Activated T-helper 2 cell treated with anti-CD3 and anti-CD28 coated beads, Interferon-gamma antibody, Interleukin-2, Interleukin-4, amounts not matched to agents 10 μg/mL and 5 μg/mL and 100 μg/mL, durations not matched to agents 14 hours and 24 hours and 36 hours (primary cell): ENCODE measurements at regions of chr16 and their contacts with region 1.

Region 1: DNA sequence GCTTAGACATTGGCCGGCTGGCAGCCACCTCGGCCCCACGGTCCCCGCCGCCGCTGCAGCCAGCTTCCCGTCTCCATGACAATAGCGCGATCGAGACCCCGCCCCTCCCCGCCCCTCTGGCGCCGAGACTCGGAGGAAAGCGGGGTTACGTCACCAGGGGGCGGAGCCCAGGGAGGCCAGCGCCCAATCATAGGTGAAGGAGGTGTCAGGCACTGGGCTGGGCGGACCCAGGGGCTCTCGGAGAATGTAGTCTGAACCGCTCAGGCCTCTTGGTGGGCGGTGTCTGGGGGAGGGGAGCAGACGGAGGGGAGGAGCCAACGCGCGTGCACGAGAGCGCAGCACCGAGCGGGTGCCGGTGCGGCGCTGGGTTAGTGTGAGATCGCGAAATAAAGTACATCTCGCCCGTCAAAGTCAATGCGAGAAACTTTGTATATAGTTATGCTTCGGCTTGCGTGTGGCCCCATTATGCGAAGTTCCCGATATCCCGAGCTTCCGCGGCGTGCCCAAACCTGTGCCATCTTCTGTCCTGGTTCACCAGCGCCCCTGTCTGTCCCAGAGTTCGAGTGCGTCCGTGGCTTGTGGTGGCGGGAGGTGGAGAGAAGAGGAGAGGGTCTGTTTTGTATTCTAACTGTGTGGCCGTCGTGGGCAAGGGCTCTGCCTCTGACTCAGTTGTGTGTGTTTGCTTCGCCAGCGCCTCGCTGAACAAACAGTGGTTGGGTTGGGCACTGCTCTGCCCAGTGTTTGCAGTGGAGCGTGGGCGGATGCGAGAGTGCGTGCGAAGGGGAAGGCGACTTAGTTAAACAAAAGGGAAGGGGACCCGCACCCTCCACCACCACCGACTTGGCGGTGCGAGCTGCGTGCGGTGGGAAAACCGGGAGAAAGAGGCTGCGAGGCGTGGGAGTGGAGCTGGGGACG is 1.3 kb upstream of the IRX5 start:
- DNase-seq: peak; percentile 94
- H3K4me3 Mint-ChIP-seq: peak overlapping the region; percentile 90
- H3K27ac Mint-ChIP-seq: peak overlapping the region; percentile 77
- H3K4me1 Mint-ChIP-seq: peaks cover 23% of the 10 kb centered on the region
- H3K27me3 Mint-ChIP-seq: peaks cover 70% of the 10 kb centered on the region

Region 2: GRCh38 chr16:53549970-53550690 is 1379.2 kb before region 1 on chr16:
- intact Hi-C with region 1: loop called (anchors 10 kb)
- DNase-seq: peak; percentile 17
- H3K4me3 Mint-ChIP-seq: no peak overlapping the region
- H3K27ac Mint-ChIP-seq: no peak overlapping the region
- H3K4me1 Mint-ChIP-seq: peaks cover 34% of the 10 kb centered on the region
- H3K27me3 Mint-ChIP-seq: peaks cover 26% of the 10 kb centered on the region

Region 3: GRCh38 chr16:53773150-53773846 is 1156.0 kb before region 1 on chr16:
- intact Hi-C with region 1: loop called (anchors 10 kb)
- DNase-seq: no peak
- H3K4me3 Mint-ChIP-seq: no peak overlapping the region
- H3K27ac Mint-ChIP-seq: no peak overlapping the region
- H3K4me1 Mint-ChIP-seq: peaks cover 30% of the 10 kb centered on the region
- H3K27me3 Mint-ChIP-seq: no peaks in the 10 kb centered on the region

Region 4: DNA sequence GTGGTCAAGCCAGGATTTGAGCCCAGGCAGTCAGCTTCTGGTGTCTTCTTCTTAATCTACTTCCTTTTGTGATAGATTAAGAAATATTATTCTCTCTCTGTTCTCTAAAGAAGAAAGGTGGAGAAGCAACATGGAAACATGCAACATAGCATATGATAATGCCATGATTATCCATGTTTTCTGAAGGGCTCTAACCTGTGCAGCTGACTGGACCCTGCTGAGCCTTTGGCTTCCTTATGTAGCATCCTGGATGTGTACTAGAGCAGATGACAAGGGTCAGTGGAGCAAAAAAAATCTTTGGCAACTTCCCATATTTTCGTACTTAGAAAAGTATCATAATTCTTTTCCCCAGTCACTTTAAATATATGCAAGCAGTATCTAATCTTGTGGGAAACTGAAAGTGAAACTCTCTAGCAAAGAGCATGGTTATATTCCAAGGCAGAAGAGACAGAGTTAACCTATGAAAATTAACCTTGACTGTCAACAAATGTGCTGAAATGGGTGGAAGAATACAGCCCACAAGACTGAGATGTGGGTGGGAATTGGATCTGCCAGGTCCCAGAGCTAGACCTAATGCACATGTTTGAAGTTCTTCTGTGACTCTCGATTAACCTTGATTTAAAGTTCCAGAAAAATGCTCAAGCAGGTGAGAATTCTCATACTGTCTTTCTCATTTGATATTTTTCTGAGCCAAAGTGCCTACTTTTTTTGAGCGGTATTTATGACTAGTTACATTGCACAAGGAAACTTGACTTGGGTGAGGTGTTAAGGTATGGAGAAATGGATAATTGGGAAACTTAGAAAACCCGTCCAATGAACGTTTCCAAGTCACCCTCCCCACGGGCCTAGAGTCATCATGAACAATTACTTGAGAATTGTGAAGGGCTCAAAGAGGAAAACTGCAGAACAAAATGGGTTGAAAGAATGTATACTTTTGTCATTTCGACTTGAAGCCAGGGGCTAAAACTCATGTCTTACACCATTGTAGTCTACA is 976.8 kb before region 1 on chr16:
- intact Hi-C with region 1: loop called (anchors 5 kb)
- DNase-seq: no peak
- H3K4me3 Mint-ChIP-seq: peak overlapping the region; percentile 19
- H3K27ac Mint-ChIP-seq: peak overlapping the region; percentile 29
- H3K4me1 Mint-ChIP-seq: peaks cover 31% of the 10 kb centered on the region
- H3K27me3 Mint-ChIP-seq: no peaks in the 10 kb centered on the region

Region 5: GRCh38 chr16:54812229-54812628 is 117.1 kb before region 1 on chr16:
- intact Hi-C with region 1: no loop called
- DNase-seq: no peak
- H3K4me3 Mint-ChIP-seq: no peak overlapping the region
- H3K27ac Mint-ChIP-seq: no peak overlapping the region
- H3K4me1 Mint-ChIP-seq: no peaks in the 10 kb centered on the region
- H3K27me3 Mint-ChIP-seq: no peaks in the 10 kb centered on the region

Region 6: DNA sequence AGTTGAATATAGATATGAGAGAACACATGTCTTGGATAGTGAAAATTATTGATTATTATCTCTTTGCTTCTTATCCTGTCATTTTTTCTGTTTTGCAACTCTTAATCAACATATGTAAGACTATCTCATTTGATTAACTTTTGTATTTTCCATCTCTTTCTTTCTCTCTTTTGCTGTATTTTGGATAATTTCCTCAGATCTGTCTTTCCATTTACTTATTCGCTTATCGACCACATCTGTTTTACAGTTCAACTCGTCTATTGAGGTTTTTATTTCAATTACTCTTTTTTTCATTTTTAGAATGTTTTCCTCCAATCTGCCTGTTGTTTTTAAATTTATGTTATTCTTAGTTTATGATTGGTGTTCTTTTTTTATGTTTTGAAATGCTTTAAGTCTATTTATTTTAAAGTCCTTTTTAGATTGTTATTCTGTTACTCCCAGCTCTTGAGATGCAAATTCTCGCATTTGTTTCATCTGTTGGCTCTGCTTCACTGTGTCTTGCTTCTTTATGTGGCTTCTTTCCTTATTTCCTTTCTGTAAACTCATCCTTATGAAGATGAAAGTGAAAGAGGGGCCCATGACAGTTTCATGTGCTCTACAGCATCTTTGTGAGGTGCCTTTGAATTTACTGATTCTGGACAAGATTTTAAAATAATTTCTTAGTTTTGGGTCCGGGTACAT is 86.5 kb before region 1 on chr16:
- intact Hi-C with region 1: no loop called
- DNase-seq: no peak
- H3K4me3 Mint-ChIP-seq: no peak overlapping the region
- H3K27ac Mint-ChIP-seq: no peak overlapping the region
- H3K4me1 Mint-ChIP-seq: no peaks in the 10 kb centered on the region
- H3K27me3 Mint-ChIP-seq: no peaks in the 10 kb centered on the region